ENCODE measurements at regions of chr19 and their contacts with region 1.

Region 1: GRCh38 chr19:8158411-8159074 is 9.2 kb upstream of the FBN3 start:
- DNase-seq: no peak
- H3K4me3 ChIP-seq: no peak overlapping the region
- H3K27ac ChIP-seq: no peak overlapping the region
- H3K4me1 ChIP-seq: peaks cover 0 to 30% (median 6%) of the 10 kb centered on the region in 6 donors
- H3K27me3 ChIP-seq: peaks cover 0 to 18% (median 0%) of the 10 kb centered on the region in 7 donors
- CTCF ChIP-seq: peak; percentile 70 to 90 (median 80)
- POLR2A ChIP-seq: no peak

Region 2: DNA sequence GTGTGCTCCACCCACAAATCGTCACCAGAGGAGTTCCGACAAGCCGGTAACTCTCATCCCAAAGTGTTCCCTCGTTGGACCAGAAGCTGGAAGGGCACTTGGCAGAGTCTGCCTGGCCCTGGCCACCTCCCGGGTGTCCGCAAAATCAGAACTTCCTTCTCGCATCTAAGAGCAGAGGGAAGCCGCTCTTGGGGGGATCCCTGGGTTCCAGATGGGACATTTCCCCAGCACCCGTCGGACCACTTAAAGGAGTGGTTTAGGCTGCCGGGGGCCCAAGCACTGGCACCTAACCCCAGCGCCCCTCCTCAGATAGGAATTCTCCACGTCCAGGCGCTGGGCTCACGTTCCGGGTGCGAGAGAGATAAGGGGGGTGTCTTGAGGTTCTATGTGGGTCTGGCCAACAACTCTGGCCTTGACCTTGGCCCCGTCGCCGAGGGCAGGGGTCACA is 255.7 kb before region 1 on chr19:
- intact Hi-C with region 1: no loop called
- DNase-seq: no peak
- H3K4me3 ChIP-seq: peak overlapping the region; percentile 52 to 89 (median 74)
- H3K27ac ChIP-seq: peak overlapping the region; percentile 83 to 95 (median 92)
- H3K4me1 ChIP-seq: peaks cover 14 to 49% (median 41%) of the 10 kb centered on the region in 6 donors
- H3K27me3 ChIP-seq: peaks cover 0 to 13% (median 0%) of the 10 kb centered on the region in 7 donors
- CTCF ChIP-seq: no peak
- POLR2A ChIP-seq: no peak

Region 3: GRCh38 chr19:8252922-8253589 is 94.5 kb after region 1 on chr19:
- intact Hi-C with region 1: loop called (anchors 2 kb)
- DNase-seq: peak; percentile 95
- H3K4me3 ChIP-seq: no peak overlapping the region
- H3K27ac ChIP-seq: no peak overlapping the region
- H3K4me1 ChIP-seq: peaks cover 0 to 13% (median 6%) of the 10 kb centered on the region in 6 donors
- H3K27me3 ChIP-seq: no peaks in the 10 kb centered on the region
- CTCF ChIP-seq: peak; percentile 92 to 97 (median 95)
- POLR2A ChIP-seq: no peak